ENCODE measurements at regions of chr16 and their contacts with region 1.

Region 1: DNA sequence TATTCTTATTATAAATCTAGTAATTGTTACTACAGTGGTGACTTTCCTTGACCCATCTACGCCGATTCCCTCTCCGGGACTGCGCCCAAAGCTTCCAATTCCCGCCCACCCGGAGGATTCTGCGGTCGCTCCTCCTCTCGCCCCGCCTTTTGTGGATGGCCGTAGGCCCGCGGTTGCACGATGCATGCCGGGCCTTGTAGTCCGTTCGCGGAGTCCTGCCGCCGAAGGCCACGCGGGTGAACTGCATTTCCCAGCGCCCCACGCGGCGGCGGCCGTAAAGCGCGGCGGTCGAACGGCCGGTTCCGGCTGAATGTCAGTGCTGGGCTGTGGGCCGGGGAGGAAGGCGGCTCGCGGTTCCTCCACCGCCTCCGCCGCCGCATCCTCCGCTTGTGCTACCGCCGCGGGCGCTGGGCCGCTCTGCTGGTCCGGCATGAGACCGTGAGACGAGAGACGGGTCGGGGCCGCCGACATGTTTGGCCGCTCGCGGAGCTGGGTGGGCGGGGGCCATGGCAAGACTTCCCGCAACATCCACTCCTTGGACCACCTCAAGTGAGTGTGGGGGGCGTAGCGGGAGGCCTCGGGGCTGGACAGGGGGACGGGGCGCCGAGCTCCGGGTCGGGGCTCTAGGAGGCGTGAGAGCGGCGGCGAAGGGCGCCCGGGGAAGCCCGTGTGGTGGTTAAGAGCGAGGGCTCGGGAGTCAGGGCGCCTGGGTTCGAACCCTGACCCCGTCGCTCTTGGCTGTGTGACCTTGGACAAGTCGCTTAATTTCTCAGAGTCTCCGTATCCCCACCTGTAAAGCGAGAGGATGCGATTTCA is at the start of gene CLEC16A:
- H3K4me3 ChIP-seq: peak within 1 kb of the TSS; percentile 91
- H3K27ac ChIP-seq: peak within 1 kb of the TSS; percentile 63; the same call in 1 of the 2 replicates
- H3K4me1 ChIP-seq: peaks cover 19% of the 10 kb centered on the region
- CTCF ChIP-seq: peak; percentile 43; the same call in 1 of the 2 replicates

Region 2: GRCh38 chr16:10743610-10744393 is 200.7 kb before region 1 on chr16 and contains the start of gene NUBP1:
- CTCF ChIA-PET with region 1: no interaction called
- POLR2A ChIA-PET with region 1: interaction called, 13 read pairs
- H3K4me3 ChIP-seq: peak within 1 kb of the TSS; percentile 80
- H3K27ac ChIP-seq: peak within 1 kb of the TSS; percentile 88
- H3K4me1 ChIP-seq: no peaks in the 10 kb centered on the region; the same call in 1 of the 2 replicates
- CTCF ChIP-seq: no peak

Region 3: DNA sequence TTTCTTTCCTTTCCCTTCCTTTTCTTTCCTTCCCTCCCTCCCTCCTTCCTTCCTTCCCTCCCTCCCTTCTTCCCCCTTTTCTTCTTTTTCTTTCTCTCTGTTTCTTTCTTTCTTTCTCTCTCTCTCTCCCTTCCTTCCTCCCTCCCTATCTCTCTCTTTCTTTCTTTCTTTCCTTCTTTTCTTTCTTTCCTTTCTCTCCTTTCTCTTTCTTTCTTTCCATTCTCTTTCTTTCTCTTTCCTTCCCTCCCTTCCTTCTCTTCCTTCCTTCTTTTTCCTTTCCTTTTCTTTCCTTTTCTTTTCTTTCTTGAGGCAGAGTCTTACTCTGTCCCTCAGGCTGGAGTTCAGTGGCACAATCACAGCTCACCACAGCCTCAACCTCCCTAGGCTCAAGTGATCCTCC is 33.2 kb before region 1 on chr16:
- CTCF ChIA-PET with region 1: no interaction called
- POLR2A ChIA-PET with region 1: no interaction called
- H3K4me3 ChIP-seq: no peak overlapping the region
- H3K27ac ChIP-seq: no peak overlapping the region
- H3K4me1 ChIP-seq: no peaks in the 10 kb centered on the region
- CTCF ChIP-seq: no peak

Region 4: DNA sequence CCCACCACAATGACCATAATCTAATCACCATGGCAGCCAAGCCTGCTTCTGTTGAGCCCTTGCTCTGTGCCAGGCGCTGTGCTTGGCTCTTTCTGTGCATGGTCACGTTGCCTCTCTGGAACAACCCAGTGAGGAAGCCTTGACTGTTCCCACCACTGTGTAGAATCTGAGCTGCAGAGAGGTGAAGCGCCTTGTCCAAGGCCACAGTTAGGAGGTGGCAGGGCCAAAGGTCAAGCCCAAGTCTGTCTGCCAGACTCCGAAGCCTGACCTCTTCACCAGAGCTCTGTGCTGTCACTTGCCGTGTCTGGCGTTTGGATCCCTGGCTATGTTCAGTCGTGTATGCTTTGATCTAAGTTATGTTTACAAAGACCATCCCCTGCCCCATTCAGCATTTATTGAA is 10.4 kb after region 1 on chr16:
- CTCF ChIA-PET with region 1: interaction called, 72 read pairs
- POLR2A ChIA-PET with region 1: interaction called, 5 read pairs
- H3K4me3 ChIP-seq: no peak overlapping the region
- H3K27ac ChIP-seq: no peak overlapping the region
- H3K4me1 ChIP-seq: peaks cover 15% of the 10 kb centered on the region
- CTCF ChIP-seq: no peak

Region 5: DNA sequence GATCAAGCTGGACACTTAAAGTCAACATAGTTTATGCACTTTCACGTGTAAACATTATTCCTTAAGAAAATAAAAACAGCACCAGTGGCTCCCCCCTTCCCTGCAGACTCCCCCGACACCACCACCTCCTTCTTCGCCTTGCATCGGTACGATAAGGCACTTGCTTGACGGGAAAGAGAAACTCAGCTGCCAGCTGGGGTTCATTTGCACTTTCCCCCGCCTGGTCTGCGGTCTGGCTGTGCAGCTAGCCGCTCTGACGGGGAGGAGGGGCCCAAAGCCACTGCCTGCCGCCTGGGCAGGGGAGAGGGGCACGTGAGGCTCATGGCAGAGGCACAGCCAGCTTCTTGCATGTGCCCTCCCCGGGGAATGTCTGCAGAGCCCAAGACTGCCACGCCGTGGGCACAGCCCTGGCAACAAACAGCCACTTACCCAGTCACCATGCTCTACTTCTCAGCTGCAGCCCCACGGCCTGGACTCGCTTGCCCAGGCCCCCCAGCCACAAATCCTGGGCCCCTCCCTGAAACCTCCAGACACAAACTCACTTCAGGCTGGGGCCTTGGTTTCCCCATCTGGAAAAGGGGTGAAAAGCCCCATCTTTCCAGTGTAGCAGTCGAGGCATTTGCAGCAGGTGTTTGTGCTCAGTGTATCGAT is 353.2 kb after region 1 on chr16:
- CTCF ChIA-PET with region 1: no interaction called
- POLR2A ChIA-PET with region 1: no interaction called
- H3K4me3 ChIP-seq: no peak overlapping the region
- H3K27ac ChIP-seq: no peak overlapping the region
- H3K4me1 ChIP-seq: no peaks in the 10 kb centered on the region; the same call in 1 of the 2 replicates
- CTCF ChIP-seq: no peak